A549 (cell line): ENCODE measurements at regions of chr17 and their contacts with region 1.

Region 1: GRCh38 chr17:8997994-8998628 is 23.2 kb upstream of the NTN1 start:
- DNase-seq: peak; percentile 75 to 89
- ATAC-seq: peak; percentile 69 to 86
- H3K4me3 ChIP-seq: no peak overlapping the region
- H3K27ac ChIP-seq: no peak overlapping the region
- H3K4me1 ChIP-seq: no peaks in the 10 kb centered on the region
- CTCF ChIP-seq: peak; percentile 96
- EP300 ChIP-seq: no peak
- POLR2A ChIP-seq: no peak
- RAD21 ChIP-seq: peak; percentile 76 to 84

Region 2: DNA sequence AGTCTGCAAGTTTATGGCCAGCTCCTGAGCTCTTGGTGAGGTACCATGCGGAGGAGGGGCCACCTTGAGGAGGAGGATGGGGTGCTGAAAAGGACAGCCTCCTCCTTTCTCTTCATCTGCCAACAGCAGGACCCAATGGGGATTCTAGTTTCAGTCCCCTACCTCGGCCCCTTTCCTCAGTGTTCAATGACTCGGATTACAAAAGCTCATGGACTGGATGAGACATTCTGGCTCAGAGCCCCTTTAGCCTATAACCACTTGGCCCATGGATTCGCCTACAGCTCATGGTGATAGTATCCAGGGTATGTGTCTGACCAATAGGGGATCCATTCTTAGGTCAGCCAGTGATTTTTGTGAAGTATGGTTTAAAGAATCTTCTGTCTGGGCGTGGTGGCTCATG is 122.2 kb before region 1 on chr17:
- CTCF ChIA-PET with region 1: interaction called, 11 read pairs
- POLR2A ChIA-PET with region 1: no interaction called
- DNase-seq: no peak
- ATAC-seq: no peak
- H3K4me3 ChIP-seq: no peak overlapping the region
- H3K27ac ChIP-seq: no peak overlapping the region
- H3K4me1 ChIP-seq: peaks cover 7% of the 10 kb centered on the region
- CTCF ChIP-seq: no peak
- EP300 ChIP-seq: no peak
- POLR2A ChIP-seq: no peak
- RAD21 ChIP-seq: no peak

Region 3: GRCh38 chr17:8887834-8888703 is 110.0 kb before region 1 on chr17:
- CTCF ChIA-PET with region 1: interaction called, 158 read pairs
- POLR2A ChIA-PET with region 1: no interaction called
- DNase-seq: peak; percentile 69 to 84
- ATAC-seq: peak; percentile 85 to 96
- H3K4me3 ChIP-seq: no peak overlapping the region
- H3K27ac ChIP-seq: 0 out of 6 replicates have a peak overlapping the region, but pooled peaks of 1 of the 2 experiments have one; percentile 11
- H3K4me1 ChIP-seq: 0 out of 3 replicates have a peak, but pooled peaks cover 3% of the 10 kb centered on the region
- CTCF ChIP-seq: peak; percentile 65; the same call in 2 of the 3 replicates
- EP300 ChIP-seq: no peak
- POLR2A ChIP-seq: no peak
- RAD21 ChIP-seq: peak; percentile 72 to 75

Region 4: GRCh38 chr17:8954339-8954738 is 43.8 kb before region 1 on chr17:
- CTCF ChIA-PET with region 1: interaction called, 14 read pairs
- POLR2A ChIA-PET with region 1: no interaction called
- DNase-seq: no peak
- ATAC-seq: no peak
- H3K4me3 ChIP-seq: no peak overlapping the region
- H3K27ac ChIP-seq: no peak overlapping the region
- H3K4me1 ChIP-seq: no peaks in the 10 kb centered on the region
- CTCF ChIP-seq: no peak
- EP300 ChIP-seq: no peak
- POLR2A ChIP-seq: no peak
- RAD21 ChIP-seq: no peak

Region 5: DNA sequence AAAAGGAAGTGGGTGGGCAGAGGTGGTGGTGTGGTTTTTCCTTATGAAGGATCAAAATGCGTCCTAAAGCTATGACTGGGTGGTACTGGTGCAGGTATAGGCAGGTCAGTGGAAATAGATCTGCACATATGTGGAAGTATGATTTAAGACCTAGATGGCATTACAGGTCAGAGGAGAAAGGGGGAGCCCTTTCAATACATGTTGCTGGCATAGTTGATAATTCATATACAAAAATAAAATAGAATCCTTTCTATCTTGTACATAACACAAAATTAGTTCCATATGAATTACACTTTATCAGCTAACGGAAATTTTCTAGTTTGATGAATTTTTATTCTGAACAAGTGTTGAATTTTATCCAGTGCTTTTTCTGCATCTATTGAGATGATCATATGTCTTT is 11.8 kb before region 1 on chr17:
- CTCF ChIA-PET with region 1: interaction called, 16 read pairs
- POLR2A ChIA-PET with region 1: no interaction called
- DNase-seq: no peak
- ATAC-seq: peak in 1 of 2 experiments; percentile 71; a peak in 2 of 6 replicates
- H3K4me3 ChIP-seq: no peak overlapping the region
- H3K27ac ChIP-seq: no peak overlapping the region
- H3K4me1 ChIP-seq: no peaks in the 10 kb centered on the region
- CTCF ChIP-seq: peak; percentile 21; the same call in 1 of the 3 replicates
- EP300 ChIP-seq: no peak
- POLR2A ChIP-seq: no peak
- RAD21 ChIP-seq: no peak

Region 6: GRCh38 chr17:9021158-9021991 is 23.3 kb after region 1 on chr17 and contains the start of gene NTN1:
- CTCF ChIA-PET with region 1: interaction called, 18 read pairs
- POLR2A ChIA-PET with region 1: no interaction called
- DNase-seq: no peak
- ATAC-seq: peak; percentile 54 to 72
- H3K4me3 ChIP-seq: peak within 1 kb of the TSS; percentile 84
- H3K27ac ChIP-seq: peak within 1 kb of the TSS in 1 of 2 experiments; percentile 66; a peak in 3 of 6 replicates
- H3K4me1 ChIP-seq: peaks cover 14% of the 10 kb centered on the region; the same call in 1 of the 3 replicates
- CTCF ChIP-seq: no peak
- EP300 ChIP-seq: no peak
- POLR2A ChIP-seq: no peak
- RAD21 ChIP-seq: no peak
- polyA plus RNA-seq, gene NTN1: 0.13 and 0.21 TPM in 2 replicates

Region 7: DNA sequence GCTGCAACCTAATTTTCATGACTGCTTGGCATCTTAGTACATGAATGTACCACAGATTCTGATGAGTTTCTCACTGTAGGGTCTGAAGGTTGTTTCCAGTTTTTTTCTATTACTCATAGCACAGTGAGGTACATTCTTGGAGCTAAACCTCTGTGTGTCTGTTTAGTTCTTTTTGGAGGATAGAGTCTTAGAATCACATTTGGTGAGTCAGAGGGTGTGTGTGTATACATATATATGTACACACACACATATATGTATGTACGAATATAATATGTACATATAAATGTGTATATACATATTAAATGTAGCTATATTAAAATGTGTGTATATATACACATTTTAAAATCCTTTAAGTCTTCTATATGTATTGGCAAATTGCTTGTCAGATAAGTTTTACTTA is 96.1 kb after region 1 on chr17:
- CTCF ChIA-PET with region 1: no interaction called
- POLR2A ChIA-PET with region 1: no interaction called
- DNase-seq: no peak
- ATAC-seq: no peak
- H3K4me3 ChIP-seq: no peak overlapping the region
- H3K27ac ChIP-seq: no peak overlapping the region
- H3K4me1 ChIP-seq: no peaks in the 10 kb centered on the region
- CTCF ChIP-seq: no peak
- EP300 ChIP-seq: no peak
- POLR2A ChIP-seq: no peak
- RAD21 ChIP-seq: no peak

Region 8: DNA sequence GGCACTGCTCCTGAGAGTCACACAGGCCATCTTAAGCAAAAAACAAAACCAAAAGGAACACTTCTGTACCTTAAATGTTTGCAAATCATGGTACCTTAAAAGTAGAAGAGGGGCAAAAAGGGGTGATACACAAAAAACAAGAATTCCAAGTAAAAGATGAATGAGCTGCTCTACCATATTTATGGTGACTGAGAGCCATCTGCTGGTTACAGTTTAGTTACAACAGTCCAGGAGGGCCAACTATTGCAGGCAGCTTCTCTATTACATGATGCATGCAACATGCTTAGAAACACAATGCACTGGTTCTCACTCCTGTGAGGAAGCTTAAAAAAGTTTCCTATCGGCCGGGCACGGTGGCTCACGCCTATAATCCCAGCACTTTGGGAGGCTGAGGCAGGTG is 524.0 kb after region 1 on chr17:
- CTCF ChIA-PET with region 1: interaction called, 60 read pairs
- POLR2A ChIA-PET with region 1: interaction called, 3 read pairs
- DNase-seq: peak; percentile 31 to 60
- ATAC-seq: peak; percentile 85 to 91
- H3K4me3 ChIP-seq: no peak overlapping the region
- H3K27ac ChIP-seq: no peak overlapping the region
- H3K4me1 ChIP-seq: no peaks in the 10 kb centered on the region
- CTCF ChIP-seq: peak; percentile 83
- EP300 ChIP-seq: no peak
- POLR2A ChIP-seq: no peak
- RAD21 ChIP-seq: peak; percentile 87 to 88